ENCODE measurements at regions of chr6 and their contacts with region 1.

Region 1: GRCh38 chr6:51541847-51542246 is 545.6 kb downstream of the PKHD1 start:
- DNase-seq: no peak
- H3K4me3 ChIP-seq: no peak overlapping the region
- H3K4me3 Mint-ChIP-seq: no peak overlapping the region
- H3K27ac Mint-ChIP-seq: no peak overlapping the region
- H3K4me1 ChIP-seq: no peaks in the 10 kb centered on the region
- H3K4me1 Mint-ChIP-seq: peaks cover 9% of the 10 kb centered on the region
- H3K27me3 ChIP-seq: no peaks in the 10 kb centered on the region
- H3K27me3 Mint-ChIP-seq: peaks cover 9% of the 10 kb centered on the region
- CTCF ChIP-seq: no peak

Region 2: DNA sequence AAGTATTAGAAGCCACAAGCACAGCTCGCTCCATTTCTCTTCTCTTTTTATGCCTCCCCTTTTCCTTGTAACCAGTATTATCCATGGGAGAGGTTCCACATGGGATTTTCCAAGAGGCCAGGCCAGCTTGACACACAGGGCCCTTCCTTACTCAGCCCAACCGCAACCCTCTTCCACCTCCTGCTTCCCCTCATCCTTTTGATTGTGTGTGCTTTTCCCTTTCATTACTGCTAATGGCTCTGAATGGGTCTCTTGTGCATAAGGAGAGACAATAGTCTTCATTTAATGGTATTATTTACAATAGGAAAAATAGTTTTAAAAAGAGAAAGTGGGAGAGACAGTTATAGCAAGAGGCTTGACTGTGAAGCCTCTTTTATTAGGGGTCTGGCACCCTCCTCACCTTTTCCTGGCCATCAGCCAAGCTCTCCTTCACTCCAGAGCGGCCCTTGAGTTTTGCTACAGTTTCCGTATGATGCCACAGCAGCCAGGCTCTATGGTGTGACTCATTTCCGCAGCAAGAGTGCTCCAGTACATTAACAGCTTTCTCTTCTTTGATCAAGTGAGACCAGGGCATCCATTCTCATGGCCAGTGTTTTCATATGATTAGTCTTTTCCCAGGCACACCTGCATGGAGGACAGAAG is 143.7 kb before region 1 on chr6:
- CTCF ChIA-PET with region 1: no interaction called
- POLR2A ChIA-PET with region 1: no interaction called
- intact Hi-C with region 1: loop called (anchors 5 kb)
- DNase-seq: no peak
- H3K4me3 ChIP-seq: no peak overlapping the region
- H3K4me3 Mint-ChIP-seq: no peak overlapping the region
- H3K27ac Mint-ChIP-seq: no peak overlapping the region
- H3K4me1 ChIP-seq: no peaks in the 10 kb centered on the region
- H3K4me1 Mint-ChIP-seq: no peaks in the 10 kb centered on the region
- H3K27me3 ChIP-seq: no peaks in the 10 kb centered on the region
- H3K27me3 Mint-ChIP-seq: no peaks in the 10 kb centered on the region
- CTCF ChIP-seq: no peak

Region 3: DNA sequence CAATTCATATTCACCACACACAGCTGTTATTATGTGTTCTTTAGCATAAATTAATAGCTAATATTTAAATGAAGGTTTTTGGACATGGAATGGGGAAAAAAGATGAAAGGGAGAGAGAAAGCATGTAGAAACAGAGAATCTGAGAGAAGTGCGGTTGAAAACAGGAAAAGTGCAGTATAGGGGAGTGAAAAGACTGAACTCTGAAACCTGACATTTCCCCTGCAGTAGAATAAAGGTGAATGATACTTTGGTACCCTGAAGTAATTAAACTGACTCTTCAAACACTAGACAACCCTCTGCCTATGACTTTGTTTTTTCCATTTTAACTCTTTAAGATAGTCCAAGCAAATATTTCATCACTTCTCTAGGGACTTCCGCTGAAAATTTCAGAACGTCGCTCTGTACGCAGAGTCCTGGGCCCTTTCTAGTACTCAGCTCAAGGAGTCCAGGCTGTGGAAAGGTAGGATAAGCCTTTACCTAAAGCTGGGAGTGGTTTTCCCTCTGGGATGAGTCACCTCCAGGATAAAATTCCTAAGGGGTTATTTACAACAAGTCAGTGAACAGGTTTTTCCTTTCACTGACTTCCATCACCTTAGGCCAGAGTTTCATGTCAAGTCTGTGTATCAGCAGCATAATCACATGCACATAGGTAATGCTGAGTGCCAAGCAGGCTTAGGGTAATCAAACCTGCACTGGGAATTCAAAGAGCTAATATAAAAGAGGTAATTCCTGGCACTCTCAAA is 68.9 kb before region 1 on chr6:
- CTCF ChIA-PET with region 1: no interaction called
- POLR2A ChIA-PET with region 1: no interaction called
- intact Hi-C with region 1: loop called (anchors 10 kb)
- DNase-seq: peak; percentile 2 to 36
- H3K4me3 ChIP-seq: no peak overlapping the region
- H3K4me3 Mint-ChIP-seq: no peak overlapping the region
- H3K27ac Mint-ChIP-seq: no peak overlapping the region
- H3K4me1 ChIP-seq: no peaks in the 10 kb centered on the region; the same call in 1 of the 2 replicates
- H3K4me1 Mint-ChIP-seq: peaks cover 5% of the 10 kb centered on the region
- H3K27me3 ChIP-seq: no peaks in the 10 kb centered on the region
- H3K27me3 Mint-ChIP-seq: no peaks in the 10 kb centered on the region
- CTCF ChIP-seq: no peak

Region 4: GRCh38 chr6:51578994-51579393 is 37.1 kb after region 1 on chr6:
- CTCF ChIA-PET with region 1: no interaction called
- POLR2A ChIA-PET with region 1: no interaction called
- intact Hi-C with region 1: no loop called
- DNase-seq: no peak
- H3K4me3 ChIP-seq: no peak overlapping the region
- H3K4me3 Mint-ChIP-seq: no peak overlapping the region
- H3K27ac Mint-ChIP-seq: no peak overlapping the region
- H3K4me1 ChIP-seq: no peaks in the 10 kb centered on the region
- H3K4me1 Mint-ChIP-seq: no peaks in the 10 kb centered on the region
- H3K27me3 ChIP-seq: no peaks in the 10 kb centered on the region
- H3K27me3 Mint-ChIP-seq: peaks cover 10% of the 10 kb centered on the region
- CTCF ChIP-seq: no peak

Region 5: GRCh38 chr6:51711876-51712275 is 170.0 kb after region 1 on chr6:
- CTCF ChIA-PET with region 1: no interaction called
- POLR2A ChIA-PET with region 1: no interaction called
- intact Hi-C with region 1: no loop called
- DNase-seq: no peak
- H3K4me3 ChIP-seq: no peak overlapping the region
- H3K4me3 Mint-ChIP-seq: no peak overlapping the region
- H3K27ac Mint-ChIP-seq: no peak overlapping the region
- H3K4me1 ChIP-seq: no peaks in the 10 kb centered on the region
- H3K4me1 Mint-ChIP-seq: no peaks in the 10 kb centered on the region
- H3K27me3 ChIP-seq: no peaks in the 10 kb centered on the region
- H3K27me3 Mint-ChIP-seq: peaks cover 2% of the 10 kb centered on the region
- CTCF ChIP-seq: no peak

Region 6: GRCh38 chr6:51788121-51788520 is 246.3 kb after region 1 on chr6:
- CTCF ChIA-PET with region 1: no interaction called
- POLR2A ChIA-PET with region 1: no interaction called
- intact Hi-C with region 1: no loop called
- DNase-seq: no peak
- H3K4me3 ChIP-seq: no peak overlapping the region
- H3K4me3 Mint-ChIP-seq: no peak overlapping the region
- H3K27ac Mint-ChIP-seq: no peak overlapping the region
- H3K4me1 ChIP-seq: no peaks in the 10 kb centered on the region
- H3K4me1 Mint-ChIP-seq: no peaks in the 10 kb centered on the region
- H3K27me3 ChIP-seq: no peaks in the 10 kb centered on the region
- H3K27me3 Mint-ChIP-seq: no peaks in the 10 kb centered on the region
- CTCF ChIP-seq: no peak